Right lobe of liver (tissue), 6 donors: ENCODE measurements at regions of chr2 and their contacts with region 1.

Region 1: DNA sequence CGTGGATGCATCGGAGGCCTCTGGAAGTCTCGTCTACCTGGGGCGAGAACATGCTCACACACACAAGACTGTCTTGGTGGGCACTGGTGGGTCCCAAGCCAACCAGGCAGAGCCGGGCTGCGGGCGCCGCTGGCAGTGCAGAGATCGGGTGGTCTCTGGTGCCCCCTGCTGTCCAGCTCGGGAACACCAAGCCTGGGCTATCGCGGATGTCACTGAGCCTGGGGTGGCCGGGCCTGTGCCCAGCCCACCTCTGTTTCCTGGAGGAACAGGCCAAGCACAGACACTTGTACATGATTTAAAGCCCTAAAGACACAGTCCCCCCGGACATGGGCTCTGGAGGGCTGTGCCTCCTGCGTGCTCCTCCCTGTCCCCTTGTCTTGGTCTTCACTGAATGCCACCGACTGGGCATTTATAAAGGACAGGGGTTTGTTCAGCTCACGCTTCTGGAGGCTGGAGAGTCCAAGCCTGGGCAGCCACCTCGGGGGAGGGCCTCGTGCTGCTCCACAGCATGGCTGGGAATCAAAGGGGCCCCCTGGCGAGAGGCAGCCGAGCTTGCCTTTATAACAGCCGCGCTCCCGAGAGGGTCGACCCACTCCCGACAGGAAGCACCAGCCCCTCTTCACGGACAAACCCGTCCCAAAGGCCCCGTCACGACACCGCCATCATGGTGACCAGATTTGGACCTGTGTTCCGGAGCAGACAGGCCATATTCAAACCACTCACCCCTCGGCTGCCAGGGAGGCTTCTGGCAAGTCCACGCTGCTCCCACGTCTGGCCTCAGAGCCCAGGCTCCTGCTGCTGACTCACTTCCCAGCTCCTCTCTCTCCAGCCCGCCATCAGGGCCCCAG is 3.6 kb upstream of the OTOS start:
- DNase-seq: peak; percentile 70 to 80 (median 72)
- ATAC-seq: peak; percentile 84 to 95 (median 93)
- H3K4me3 ChIP-seq: no peak overlapping the region
- H3K27ac ChIP-seq: no peak overlapping the region
- H3K4me1 ChIP-seq: no peaks in the 10 kb centered on the region
- H3K27me3 ChIP-seq: no peaks in the 10 kb centered on the region
- CTCF ChIP-seq: peak; percentile 93 to 97 (median 94)
- POLR2A ChIP-seq: no peak

Region 2: DNA sequence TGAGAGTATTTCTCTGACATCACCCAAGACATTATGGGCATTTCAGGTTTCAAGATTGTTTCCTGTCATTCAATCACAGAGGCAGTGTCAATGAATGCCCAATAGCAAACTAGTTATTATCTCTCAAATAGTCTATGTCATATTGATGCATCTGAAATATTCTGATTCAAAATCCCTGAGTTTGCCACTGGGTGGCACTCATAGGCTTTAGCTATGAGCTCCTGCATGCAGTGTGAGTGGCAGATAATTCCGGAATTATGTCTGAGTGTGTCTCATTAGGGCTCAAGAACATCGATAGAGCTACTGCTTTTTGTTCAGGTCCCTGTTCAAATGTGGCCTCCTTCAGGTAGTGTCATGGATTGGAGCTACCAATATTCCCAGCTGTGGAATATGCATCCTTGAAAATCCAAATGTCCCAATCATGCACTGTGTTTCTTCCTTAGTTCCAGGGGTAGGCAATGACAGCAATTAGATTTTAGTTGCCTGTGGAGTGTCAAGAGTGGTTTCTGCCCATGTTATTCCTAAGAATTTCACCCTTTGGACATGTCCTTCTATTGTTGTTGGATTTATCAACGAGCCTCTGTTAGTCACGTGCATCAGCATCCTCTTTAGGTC is 82.9 kb before region 1 on chr2:
- intact Hi-C with region 1: loop called (anchors 2 to 5 kb)
- DNase-seq: no peak
- ATAC-seq: peak; percentile 79 to 87 (median 84)
- H3K4me3 ChIP-seq: no peak overlapping the region
- H3K27ac ChIP-seq: no peak overlapping the region
- H3K4me1 ChIP-seq: no peaks in the 10 kb centered on the region
- H3K27me3 ChIP-seq: no peaks in the 10 kb centered on the region
- CTCF ChIP-seq: peak; percentile 57 to 72 (median 66)
- POLR2A ChIP-seq: no peak